ENCODE measurements at regions of chr16 and their contacts with region 1.

Region 1: DNA sequence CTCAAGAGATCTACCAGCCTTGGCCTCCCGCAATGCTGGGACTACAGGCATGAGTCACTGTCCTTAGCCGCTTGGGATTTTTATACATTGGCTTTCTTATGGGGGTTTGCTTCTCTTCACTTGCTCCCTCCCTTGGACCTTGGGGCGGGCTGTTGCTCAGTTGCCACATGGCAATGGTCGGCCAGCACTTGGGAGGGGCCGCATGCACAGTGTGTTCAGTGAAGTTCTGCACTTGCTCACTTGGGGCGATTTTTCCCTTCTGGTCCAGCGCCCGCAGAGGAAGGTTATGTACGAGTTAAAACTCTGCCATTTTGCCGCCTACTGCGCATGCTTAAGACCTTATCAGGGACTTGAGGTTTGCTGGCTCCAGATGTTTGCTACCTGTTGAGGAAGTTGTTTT is 1367.6 kb upstream of the CDH8 start:
- DNase-seq: no peak
- H3K4me3 Mint-ChIP-seq: no peak overlapping the region
- H3K27ac Mint-ChIP-seq: no peak overlapping the region
- H3K4me1 Mint-ChIP-seq: no peaks in the 10 kb centered on the region
- H3K27me3 Mint-ChIP-seq: no peaks in the 10 kb centered on the region

Region 2: GRCh38 chr16:62676306-62676705 is 727.5 kb before region 1 on chr16:
- intact Hi-C with region 1: no loop called
- DNase-seq: no peak
- H3K4me3 Mint-ChIP-seq: no peak overlapping the region
- H3K27ac Mint-ChIP-seq: no peak overlapping the region
- H3K4me1 Mint-ChIP-seq: no peaks in the 10 kb centered on the region
- H3K27me3 Mint-ChIP-seq: no peaks in the 10 kb centered on the region

Region 3: GRCh38 chr16:63349961-63350360 is 53.8 kb before region 1 on chr16:
- intact Hi-C with region 1: loop called (anchors 10 kb)
- DNase-seq: no peak
- H3K4me3 Mint-ChIP-seq: no peak overlapping the region
- H3K27ac Mint-ChIP-seq: no peak overlapping the region
- H3K4me1 Mint-ChIP-seq: no peaks in the 10 kb centered on the region
- H3K27me3 Mint-ChIP-seq: no peaks in the 10 kb centered on the region

Region 4: DNA sequence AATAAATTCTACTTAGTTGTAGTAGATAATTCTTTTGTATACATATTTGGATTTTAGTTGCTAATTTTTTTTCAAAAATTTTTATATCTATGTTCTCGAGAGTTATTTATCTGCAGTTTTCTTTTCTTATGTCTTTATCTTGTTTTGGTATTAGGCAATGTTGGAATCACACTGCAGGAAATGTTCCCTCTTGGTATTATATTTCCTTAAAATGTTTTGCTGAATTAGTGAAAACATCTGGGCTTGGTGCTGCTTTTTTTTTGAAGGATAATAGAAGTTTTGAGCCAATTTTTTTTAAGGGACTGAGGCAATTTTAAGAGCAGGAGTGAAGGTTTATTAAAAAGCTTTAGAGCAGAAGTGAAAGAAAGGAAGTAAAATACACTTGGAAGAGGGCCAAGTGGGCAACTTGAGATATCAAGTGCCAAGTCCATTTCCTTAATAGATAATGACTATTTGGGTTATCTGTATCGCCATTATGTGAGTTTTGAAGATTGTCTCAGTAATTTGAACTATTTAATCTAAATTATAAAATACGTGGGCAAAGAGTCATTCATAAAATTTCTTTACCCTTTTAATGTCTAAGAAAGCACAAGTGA is 22.6 kb after region 1 on chr16:
- intact Hi-C with region 1: no loop called
- DNase-seq: no peak
- H3K4me3 Mint-ChIP-seq: no peak overlapping the region
- H3K27ac Mint-ChIP-seq: no peak overlapping the region
- H3K4me1 Mint-ChIP-seq: no peaks in the 10 kb centered on the region
- H3K27me3 Mint-ChIP-seq: no peaks in the 10 kb centered on the region

Region 5: DNA sequence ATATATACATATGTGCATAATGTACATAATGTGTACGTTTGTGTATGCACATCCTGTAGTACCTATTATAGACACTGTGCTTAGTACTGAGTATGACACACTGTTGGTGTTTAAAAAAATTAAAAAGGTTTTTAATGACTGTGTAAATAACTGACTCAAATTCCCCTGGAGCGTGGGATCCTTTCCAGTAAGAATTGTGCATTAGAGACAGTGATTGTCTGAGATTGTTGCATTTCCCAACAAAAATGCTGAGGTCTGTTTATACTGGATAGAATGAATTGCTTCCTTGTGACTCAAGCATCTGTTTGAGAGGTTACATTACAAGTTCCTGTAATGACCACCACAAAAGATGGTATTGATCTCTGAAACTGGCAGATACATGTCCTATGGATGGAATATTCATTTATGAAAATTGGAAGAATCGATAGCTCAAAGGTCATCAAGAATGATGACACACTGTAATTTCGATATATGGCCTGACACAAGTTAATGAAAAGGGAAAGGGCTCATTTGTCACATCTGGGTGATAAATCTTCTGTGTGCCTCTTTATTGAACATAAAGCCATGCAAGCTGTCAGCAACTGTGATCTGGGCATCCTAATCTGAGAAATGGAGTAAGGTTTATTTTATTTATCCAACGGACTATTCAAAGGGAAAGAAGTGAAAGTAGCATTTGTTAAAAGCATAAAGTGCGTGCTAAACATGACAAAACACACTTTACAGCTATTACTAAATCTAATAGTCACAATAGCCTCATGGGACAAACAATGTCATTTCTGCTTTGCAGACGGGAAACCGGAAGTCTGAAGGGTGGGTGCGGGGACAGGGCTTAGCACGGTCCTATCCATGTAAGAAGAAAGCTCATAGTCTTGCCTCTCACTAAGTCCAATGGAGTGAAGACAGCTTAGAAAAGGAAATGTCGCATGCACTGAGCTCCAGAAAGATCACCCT is 1489.3 kb after region 1 on chr16:
- intact Hi-C with region 1: no loop called
- DNase-seq: no peak
- H3K4me3 Mint-ChIP-seq: no peak overlapping the region
- H3K27ac Mint-ChIP-seq: no peak overlapping the region
- H3K4me1 Mint-ChIP-seq: no peaks in the 10 kb centered on the region
- H3K27me3 Mint-ChIP-seq: no peaks in the 10 kb centered on the region

Measured in activated T-helper 1 cell treated with anti-CD3 and anti-CD28 coated beads, Interleukin-12 subunit alpha, Interleukin-12 subunit beta, Interleukin-2, Interleukin-4 antibody, amounts not matched to agents 30 ng/mL and 10 ng/mL and 1 ng/mL, durations not matched to agents 14 hours and 24 hours and 36 hours (primary cell).